ENCODE measurements at regions of chr6 and their contacts with region 1.

Region 1: GRCh38 chr6:89242574-89243330 is 25.6 kb upstream of the GABRR1 start:
- DNase-seq: no peak
- ATAC-seq: peak; percentile 56

Region 2: DNA sequence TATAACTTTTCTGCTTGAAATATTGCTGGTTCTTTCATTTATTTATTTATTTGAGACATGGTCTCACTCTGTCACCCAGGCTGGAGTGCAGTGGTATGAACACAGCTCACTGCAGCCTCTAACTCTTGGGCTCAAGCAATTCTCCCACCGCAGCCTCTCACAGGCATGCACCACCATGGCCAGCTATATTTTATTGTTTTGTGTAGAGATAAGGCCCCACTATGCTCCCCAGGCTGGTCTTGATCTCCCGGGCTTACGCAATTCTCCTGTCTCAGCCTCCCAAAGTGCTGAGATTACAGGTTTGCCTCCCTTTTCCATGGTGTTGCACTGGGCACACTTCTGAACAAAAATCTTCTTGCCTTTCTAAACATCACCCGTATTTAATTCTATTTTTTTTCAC is 240.2 kb before region 1 on chr6:
- intact Hi-C with region 1: no loop called
- DNase-seq: no peak
- ATAC-seq: no peak

Region 3: GRCh38 chr6:89122625-89123024 is 120.1 kb before region 1 on chr6:
- intact Hi-C with region 1: loop called (anchors 2 kb)
- DNase-seq: no peak
- ATAC-seq: peak; percentile 66